A673 (cell line): ENCODE measurements at regions of chr22 and their contacts with region 1.

Region 1: GRCh38 chr22:40044102-40044869 is 49.5 kb downstream of the FAM83F start:
- DNase-seq: peak; percentile 99
- H3K4me3 ChIP-seq: peak overlapping the region; percentile 59
- H3K27ac ChIP-seq: peak overlapping the region; percentile 73
- H3K4me1 ChIP-seq: peaks cover 43% of the 10 kb centered on the region
- H3K27me3 ChIP-seq: peaks cover 2% of the 10 kb centered on the region
- CTCF ChIP-seq: no peak

Region 2: GRCh38 chr22:39170825-39171622 is 873.3 kb before region 1 on chr22:
- CTCF ChIA-PET with region 1: no interaction called
- POLR2A ChIA-PET with region 1: no interaction called
- intact Hi-C with region 1: loop called (anchors 10 kb)
- DNase-seq: peak; percentile 84
- H3K4me3 ChIP-seq: no peak overlapping the region
- H3K27ac ChIP-seq: no peak overlapping the region
- H3K4me1 ChIP-seq: peaks cover 20% of the 10 kb centered on the region
- H3K27me3 ChIP-seq: no peaks in the 10 kb centered on the region
- CTCF ChIP-seq: peak; percentile 94

Region 3: GRCh38 chr22:39979048-39979447 is 65.2 kb before region 1 on chr22:
- CTCF ChIA-PET with region 1: no interaction called
- POLR2A ChIA-PET with region 1: no interaction called
- intact Hi-C with region 1: no loop called
- DNase-seq: no peak
- H3K4me3 ChIP-seq: no peak overlapping the region
- H3K27ac ChIP-seq: no peak overlapping the region
- H3K4me1 ChIP-seq: no peaks in the 10 kb centered on the region
- H3K27me3 ChIP-seq: peaks cover 56% of the 10 kb centered on the region
- CTCF ChIP-seq: no peak

Region 4: GRCh38 chr22:40177738-40178416 is 133.6 kb after region 1 on chr22 and contains the start of gene TNRC6B:
- CTCF ChIA-PET with region 1: no interaction called
- POLR2A ChIA-PET with region 1: no interaction called
- intact Hi-C with region 1: loop called (anchors 5 kb)
- DNase-seq: peak; percentile 98
- H3K4me3 ChIP-seq: peak within 1 kb of the TSS; percentile 61
- H3K27ac ChIP-seq: peak within 1 kb of the TSS; percentile 93
- H3K4me1 ChIP-seq: peaks cover 28% of the 10 kb centered on the region
- H3K27me3 ChIP-seq: no peaks in the 10 kb centered on the region
- CTCF ChIP-seq: no peak
- total RNA-seq, gene TNRC6B: 52.2 and 56.6 TPM in 2 replicates

Region 5: GRCh38 chr22:40193429-40194421 is 149.4 kb after region 1 on chr22:
- CTCF ChIA-PET with region 1: no interaction called
- POLR2A ChIA-PET with region 1: no interaction called
- intact Hi-C with region 1: loop called (anchors 5 kb)
- DNase-seq: peak; percentile 51
- H3K4me3 ChIP-seq: no peak overlapping the region
- H3K27ac ChIP-seq: no peak overlapping the region
- H3K4me1 ChIP-seq: peaks cover 15% of the 10 kb centered on the region
- H3K27me3 ChIP-seq: no peaks in the 10 kb centered on the region
- CTCF ChIP-seq: peak; percentile 63

Region 6: DNA sequence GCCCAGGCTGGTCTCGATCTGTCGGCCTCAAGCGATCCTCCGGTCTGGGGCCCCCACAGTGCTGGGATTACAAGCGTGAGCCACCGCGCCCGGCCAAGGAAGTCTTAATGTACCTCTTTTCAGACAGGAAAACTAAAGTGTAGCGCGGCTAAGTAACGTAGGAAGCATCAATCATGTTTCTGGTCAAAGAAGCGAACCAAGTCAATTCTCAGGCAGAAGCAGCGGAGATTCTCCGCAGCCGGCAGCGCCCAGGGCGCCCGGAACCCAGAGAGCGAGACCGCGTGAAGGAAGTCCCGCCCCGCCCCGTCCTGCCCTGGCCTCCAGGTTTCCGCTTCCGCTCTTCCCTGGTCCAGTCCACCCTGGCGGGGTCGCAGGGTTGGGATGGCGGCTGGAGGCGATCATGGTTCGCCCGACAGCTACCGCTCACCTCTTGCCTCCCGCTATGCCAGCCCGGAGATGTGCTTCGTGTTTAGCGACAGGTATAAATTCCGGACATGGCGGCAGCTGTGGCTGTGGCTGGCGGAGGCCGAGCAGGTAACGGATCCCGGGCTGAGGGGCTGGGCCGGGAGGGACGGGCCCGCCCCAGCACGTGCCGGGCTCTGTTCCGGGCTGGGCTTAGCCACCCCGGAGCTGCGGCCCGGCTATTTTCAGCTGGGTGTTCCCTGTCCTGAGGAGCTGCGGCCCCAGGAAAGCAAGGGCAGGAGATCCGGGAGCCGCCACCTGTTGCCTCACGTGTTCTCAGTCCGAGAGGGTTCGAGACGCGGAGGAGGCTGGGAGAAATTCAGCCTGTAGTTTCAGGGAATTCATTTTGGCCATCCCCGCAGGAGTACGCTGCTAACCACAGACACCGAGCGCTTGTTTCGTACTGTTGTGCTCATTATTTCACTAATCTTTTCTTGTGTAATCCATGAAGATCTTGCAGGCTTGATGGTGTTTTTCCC is 302.2 kb after region 1 on chr22 and contains the start of gene ADSL:
- CTCF ChIA-PET with region 1: interaction called, 10 read pairs
- POLR2A ChIA-PET with region 1: no interaction called
- intact Hi-C with region 1: loop called (anchors 1 kb)
- DNase-seq: peak; percentile 94
- H3K4me3 ChIP-seq: peak within 1 kb of the TSS; percentile 81
- H3K27ac ChIP-seq: peak within 1 kb of the TSS; percentile 86
- H3K4me1 ChIP-seq: peaks cover 13% of the 10 kb centered on the region
- H3K27me3 ChIP-seq: no peaks in the 10 kb centered on the region
- CTCF ChIP-seq: no peak
- total RNA-seq, gene ADSL: 133 and 144 TPM in 2 replicates